CD4-positive, alpha-beta memory T cell (primary cell): ENCODE measurements at regions of chr5 and their contacts with region 1.

Region 1: GRCh38 chr5:36241631-36242533 is at the start of gene NADK2:
- DNase-seq: peak; percentile 95 to 97 (median 96)
- H3K4me3 ChIP-seq: peak within 1 kb of the TSS; percentile 59 to 67
- H3K4me3 Mint-ChIP-seq: peak within 1 kb of the TSS; percentile 87 to 95 (median 92)
- H3K27ac ChIP-seq: peak within 1 kb of the TSS; percentile 83
- H3K27ac Mint-ChIP-seq: peak within 1 kb of the TSS; percentile 89 to 98 (median 96)
- H3K4me1 ChIP-seq: peaks cover 22% of the 10 kb centered on the region
- H3K4me1 Mint-ChIP-seq: peaks cover 35 to 57% (median 45%) of the 10 kb centered on the region in 4 donors
- H3K27me3 ChIP-seq: no peaks in the 10 kb centered on the region
- H3K27me3 Mint-ChIP-seq: no peaks in the 10 kb centered on the region
- total RNA-seq, gene NADK2: 14.1 to 14.5 TPM

Region 2: GRCh38 chr5:34929150-34929719 is 1312.6 kb before region 1 on chr5 and contains the start of gene DNAJC21:
- CTCF ChIA-PET with region 1: interaction called, 3 read pairs
- POLR2A ChIA-PET with region 1: interaction called, 16 read pairs
- intact Hi-C with region 1: loop called (anchors 1 kb)
- DNase-seq: peak; percentile 97 to 98 (median 97)
- H3K4me3 ChIP-seq: peak within 1 kb of the TSS; percentile 77 to 83
- H3K4me3 Mint-ChIP-seq: peak within 1 kb of the TSS; percentile 96 to 99 (median 98)
- H3K27ac ChIP-seq: peak within 1 kb of the TSS; percentile 84
- H3K27ac Mint-ChIP-seq: peak within 1 kb of the TSS; percentile 89 to 98 (median 96)
- H3K4me1 ChIP-seq: peaks cover 25% of the 10 kb centered on the region
- H3K4me1 Mint-ChIP-seq: peaks cover 24 to 36% (median 31%) of the 10 kb centered on the region in 4 donors
- H3K27me3 ChIP-seq: no peaks in the 10 kb centered on the region
- H3K27me3 Mint-ChIP-seq: no peaks in the 10 kb centered on the region
- total RNA-seq, gene DNAJC21: 63.7 to 67.9 TPM

Region 3: DNA sequence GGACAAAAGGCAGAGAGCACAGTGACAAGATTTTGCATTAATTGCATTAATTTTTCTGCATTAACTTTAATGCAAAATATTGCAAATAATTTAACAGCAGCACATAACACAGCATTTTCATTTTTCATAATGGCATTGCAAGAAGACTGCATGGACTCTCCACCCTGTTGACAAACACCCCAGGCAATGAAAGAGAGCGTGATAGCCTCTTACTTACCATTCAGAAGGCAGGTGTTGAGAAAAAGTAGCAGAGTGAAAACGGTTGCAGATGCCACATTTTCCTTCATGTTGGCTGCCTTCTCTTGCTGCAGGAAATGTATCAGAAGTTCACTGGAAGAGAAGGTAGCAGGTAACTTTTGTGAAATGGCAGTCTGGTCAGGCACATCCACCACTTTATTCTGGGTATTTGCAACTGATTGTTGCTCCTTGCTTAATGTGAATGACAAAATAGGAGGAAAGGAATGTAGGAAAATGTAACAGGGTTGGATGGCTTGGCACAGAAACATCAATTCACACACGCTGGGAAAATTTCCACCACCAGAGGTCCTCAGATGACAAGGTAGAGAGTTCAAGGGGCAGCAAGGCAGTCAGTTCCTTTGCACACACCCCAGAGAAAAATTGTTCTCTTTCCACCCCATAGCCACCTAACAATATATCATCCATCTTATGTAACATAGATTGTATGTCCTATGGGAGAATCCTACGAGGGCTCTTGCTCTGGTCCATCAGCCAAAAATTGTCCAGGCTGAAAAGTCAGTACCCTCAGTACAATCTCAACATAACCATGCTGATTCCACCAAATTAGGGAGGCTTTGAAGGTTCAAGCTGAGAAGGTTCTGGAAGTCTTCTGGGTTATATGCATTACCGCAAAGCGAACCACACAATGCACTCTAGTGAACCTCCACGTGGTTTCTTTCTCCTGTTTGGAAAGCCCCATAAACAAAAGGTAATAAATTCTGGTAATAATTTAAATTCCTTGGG is 1152.3 kb before region 1 on chr5:
- CTCF ChIA-PET with region 1: no interaction called
- POLR2A ChIA-PET with region 1: no interaction called
- intact Hi-C with region 1: no loop called
- DNase-seq: peak; percentile 44 to 53 (median 46)
- H3K4me3 ChIP-seq: no peak overlapping the region
- H3K4me3 Mint-ChIP-seq: no peak overlapping the region
- H3K27ac ChIP-seq: no peak overlapping the region
- H3K27ac Mint-ChIP-seq: peak overlapping the region in 1 of 7 donors; percentile 32
- H3K4me1 ChIP-seq: no peaks in the 10 kb centered on the region
- H3K4me1 Mint-ChIP-seq: no peaks in the 10 kb centered on the region
- H3K27me3 ChIP-seq: no peaks in the 10 kb centered on the region
- H3K27me3 Mint-ChIP-seq: peaks cover 4 to 5% of the 10 kb centered on the region in 2 donors

Region 4: DNA sequence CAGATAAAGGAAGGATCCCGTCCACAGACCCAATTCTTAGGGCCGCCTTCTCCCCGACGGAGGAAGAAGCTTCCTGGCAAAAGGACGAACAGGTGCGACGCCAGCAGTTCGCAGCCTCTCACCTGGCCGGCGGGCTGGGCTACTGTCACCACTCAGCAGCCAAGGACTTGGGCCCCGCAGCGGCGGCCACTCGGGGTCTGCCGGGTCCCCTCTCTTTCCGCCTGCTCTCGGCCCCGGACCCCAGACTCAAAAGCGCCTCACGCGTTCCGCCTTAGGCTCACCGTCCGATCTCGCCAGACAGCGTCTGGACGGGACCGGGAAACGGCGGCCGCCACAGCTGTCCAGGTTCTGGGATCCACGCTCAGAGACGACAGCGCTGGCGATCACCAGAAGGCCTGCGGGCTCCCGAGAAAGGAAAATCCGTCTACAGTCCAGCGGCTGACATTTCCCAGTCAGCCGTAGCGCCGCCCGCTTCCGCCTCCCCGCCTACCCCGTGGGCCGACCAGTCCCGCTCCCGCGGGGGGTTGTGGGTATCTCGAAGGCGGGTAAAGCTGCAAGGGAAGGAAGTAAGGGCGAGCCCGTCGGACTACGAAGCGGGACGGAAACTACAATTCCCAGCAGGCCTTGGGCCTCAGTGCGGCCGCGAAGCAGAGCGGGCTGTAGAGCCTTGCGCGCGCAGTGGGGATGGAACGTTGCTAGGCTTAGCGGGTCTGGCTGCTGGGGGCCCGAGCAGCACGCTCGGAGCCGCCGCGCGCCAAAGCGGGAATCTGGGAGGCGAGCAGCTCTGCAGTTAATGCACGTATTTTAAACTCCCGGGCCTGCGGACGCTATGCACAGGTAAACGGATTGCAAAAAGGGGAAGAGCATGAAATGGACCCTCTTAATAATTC is 90.2 kb before region 1 on chr5 and contains the starts of genes LMBRD2 and SKP2:
- CTCF ChIA-PET with region 1: interaction called, 17 read pairs
- POLR2A ChIA-PET with region 1: interaction called, 48 read pairs
- intact Hi-C with region 1: loop called (anchors 1 kb)
- DNase-seq: peak; percentile 95 to 99 (median 96)
- H3K4me3 ChIP-seq: peak within 1 kb of the TSS; percentile 77 to 90
- H3K4me3 Mint-ChIP-seq: peak within 1 kb of the TSS; percentile 93 to 98 (median 95)
- H3K27ac ChIP-seq: peak within 1 kb of the TSS; percentile 71
- H3K27ac Mint-ChIP-seq: peak within 1 kb of the TSS; percentile 79 to 98 (median 94)
- H3K4me1 ChIP-seq: peaks cover 58% of the 10 kb centered on the region
- H3K4me1 Mint-ChIP-seq: peaks cover 46 to 75% (median 60%) of the 10 kb centered on the region in 4 donors
- H3K27me3 ChIP-seq: no peaks in the 10 kb centered on the region
- H3K27me3 Mint-ChIP-seq: no peaks in the 10 kb centered on the region
- total RNA-seq, gene LMBRD2: 16.0 to 16.6 TPM
- total RNA-seq, gene SKP2: 21.0 to 23.9 TPM

Region 5: DNA sequence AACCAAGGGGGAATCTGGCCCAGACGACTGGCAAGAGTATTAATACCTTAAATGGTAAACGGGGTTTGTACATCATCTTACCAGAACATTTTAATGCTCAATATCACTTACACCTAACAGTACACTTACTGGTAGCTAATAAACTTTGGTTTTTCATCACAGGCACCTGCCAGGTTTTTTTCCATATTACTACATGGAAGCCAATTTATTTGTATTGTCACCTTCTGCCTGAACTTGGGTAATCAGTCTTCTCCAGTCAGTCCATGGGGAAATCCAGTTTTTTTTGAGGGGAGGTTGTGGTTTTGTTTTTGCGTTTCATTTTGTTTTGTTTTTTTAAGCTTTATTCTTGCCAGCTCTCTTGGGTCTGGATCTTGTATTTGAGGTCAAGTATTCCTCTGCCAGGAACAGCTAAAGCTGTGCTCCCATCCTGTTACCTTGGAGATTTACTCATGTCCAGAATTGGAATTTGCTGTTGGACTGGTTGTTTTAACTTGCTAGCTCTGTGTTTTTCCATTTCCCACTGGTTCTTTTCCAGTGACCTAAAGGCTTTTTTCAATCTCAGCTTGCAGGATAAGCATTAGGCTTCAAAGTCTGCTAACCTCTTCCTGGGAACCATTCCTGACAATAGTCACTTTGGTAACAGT is 11.0 kb after region 1 on chr5:
- CTCF ChIA-PET with region 1: interaction called, 21 read pairs
- POLR2A ChIA-PET with region 1: interaction called, 6 read pairs
- intact Hi-C with region 1: no loop called
- DNase-seq: no peak
- H3K4me3 ChIP-seq: no peak overlapping the region
- H3K4me3 Mint-ChIP-seq: no peak overlapping the region
- H3K27ac ChIP-seq: no peak overlapping the region
- H3K27ac Mint-ChIP-seq: no peak overlapping the region
- H3K4me1 ChIP-seq: no peaks in the 10 kb centered on the region
- H3K4me1 Mint-ChIP-seq: no peaks in the 10 kb centered on the region
- H3K27me3 ChIP-seq: no peaks in the 10 kb centered on the region
- H3K27me3 Mint-ChIP-seq: peaks cover 6 to 18% of the 10 kb centered on the region in 2 donors

Region 6: GRCh38 chr5:36279054-36279698 is 37.3 kb after region 1 on chr5:
- CTCF ChIA-PET with region 1: no interaction called
- POLR2A ChIA-PET with region 1: no interaction called
- intact Hi-C with region 1: no loop called
- DNase-seq: no peak
- H3K4me3 ChIP-seq: no peak overlapping the region
- H3K4me3 Mint-ChIP-seq: no peak overlapping the region
- H3K27ac ChIP-seq: no peak overlapping the region
- H3K27ac Mint-ChIP-seq: no peak overlapping the region
- H3K4me1 ChIP-seq: no peaks in the 10 kb centered on the region
- H3K4me1 Mint-ChIP-seq: no peaks in the 10 kb centered on the region
- H3K27me3 ChIP-seq: no peaks in the 10 kb centered on the region
- H3K27me3 Mint-ChIP-seq: peaks cover 13 to 14% of the 10 kb centered on the region in 2 donors

Region 7: DNA sequence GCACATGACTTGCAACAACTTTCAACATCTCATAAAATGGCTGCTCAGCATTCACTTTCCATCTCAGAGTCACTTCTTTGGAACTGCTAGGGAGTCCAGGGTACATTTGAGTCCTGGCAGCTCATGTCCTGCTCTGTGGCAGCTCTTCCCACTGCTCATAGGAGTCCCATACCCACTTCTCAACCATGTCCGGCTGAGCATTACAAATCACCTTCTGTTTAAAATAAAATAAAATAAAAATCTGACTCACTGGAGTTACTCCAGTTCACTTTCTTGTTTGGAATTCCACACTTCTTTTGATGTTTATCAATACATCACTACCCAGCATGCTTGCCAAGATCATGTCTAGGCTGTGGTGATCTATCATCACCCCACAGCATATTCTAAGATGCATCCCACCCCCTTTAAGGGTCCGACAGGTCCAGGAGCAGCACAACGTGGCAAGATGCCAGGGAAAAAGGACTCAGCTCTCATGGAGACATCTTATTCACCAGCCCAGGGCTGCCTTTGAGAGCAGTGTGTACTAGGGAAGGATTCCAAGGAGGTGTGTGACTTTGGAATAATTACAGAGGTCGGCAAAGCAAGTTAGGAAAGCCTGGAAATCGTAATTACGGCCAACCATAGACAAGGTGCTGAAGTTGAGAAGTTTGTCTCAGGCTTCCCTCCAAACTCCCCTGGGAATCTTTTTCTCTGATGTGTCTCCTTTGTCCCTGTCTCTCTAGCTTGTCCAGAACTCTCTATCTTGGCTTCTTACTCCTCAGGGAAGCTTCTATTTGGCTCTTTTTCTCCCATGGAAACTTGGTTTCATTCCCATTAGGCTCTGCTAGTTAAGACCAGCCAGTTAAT is 253.1 kb after region 1 on chr5:
- CTCF ChIA-PET with region 1: no interaction called
- POLR2A ChIA-PET with region 1: no interaction called
- intact Hi-C with region 1: no loop called
- DNase-seq: no peak
- H3K4me3 ChIP-seq: no peak overlapping the region
- H3K4me3 Mint-ChIP-seq: no peak overlapping the region
- H3K27ac ChIP-seq: no peak overlapping the region
- H3K27ac Mint-ChIP-seq: no peak overlapping the region
- H3K4me1 ChIP-seq: no peaks in the 10 kb centered on the region
- H3K4me1 Mint-ChIP-seq: no peaks in the 10 kb centered on the region
- H3K27me3 ChIP-seq: no peaks in the 10 kb centered on the region
- H3K27me3 Mint-ChIP-seq: peaks cover 5 to 9% of the 10 kb centered on the region in 2 donors

Region 8: DNA sequence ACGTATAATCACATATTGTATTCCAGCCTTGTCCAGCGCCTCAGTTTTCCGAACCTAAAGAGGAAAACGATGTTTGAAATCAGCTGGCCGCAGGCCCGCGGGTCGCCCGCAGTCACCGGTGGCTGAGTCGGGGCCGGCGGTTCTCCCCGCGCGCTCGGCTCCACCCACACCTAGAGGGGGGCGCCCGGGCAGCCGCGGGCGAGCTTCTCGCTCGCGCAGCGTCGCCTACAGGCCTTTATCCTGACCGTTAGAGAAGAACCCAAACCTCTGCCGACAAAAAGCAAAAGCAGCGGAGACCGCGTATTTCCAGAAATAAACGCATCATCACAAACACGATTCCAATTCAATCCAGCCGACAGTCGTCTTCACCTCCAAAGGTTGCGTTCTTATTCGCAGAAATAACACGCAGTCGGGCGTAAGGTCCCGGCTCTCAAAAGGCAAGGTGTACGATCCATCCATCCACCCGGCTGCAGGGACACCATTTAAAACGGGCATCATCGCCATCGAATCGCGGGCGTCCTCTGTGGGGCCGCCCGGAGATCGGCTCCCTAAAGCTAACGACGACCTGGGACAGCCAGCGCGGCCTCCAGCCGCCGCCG is 634.0 kb after region 1 on chr5:
- CTCF ChIA-PET with region 1: no interaction called
- POLR2A ChIA-PET with region 1: interaction called, 7 read pairs
- intact Hi-C with region 1: loop called (anchors 1 kb)
- DNase-seq: peak; percentile 74 to 80 (median 76)
- H3K4me3 ChIP-seq: peak overlapping the region; percentile 78 to 86
- H3K4me3 Mint-ChIP-seq: peak overlapping the region; percentile 89 to 99 (median 94)
- H3K27ac ChIP-seq: peak overlapping the region; percentile 93
- H3K27ac Mint-ChIP-seq: peak overlapping the region; percentile 92 to 97 (median 95)
- H3K4me1 ChIP-seq: peaks cover 62% of the 10 kb centered on the region
- H3K4me1 Mint-ChIP-seq: peaks cover 29 to 58% (median 38%) of the 10 kb centered on the region in 4 donors
- H3K27me3 ChIP-seq: no peaks in the 10 kb centered on the region
- H3K27me3 Mint-ChIP-seq: no peaks in the 10 kb centered on the region